ENCODE measurements at regions of chr18 and their contacts with region 1.

Region 1: DNA sequence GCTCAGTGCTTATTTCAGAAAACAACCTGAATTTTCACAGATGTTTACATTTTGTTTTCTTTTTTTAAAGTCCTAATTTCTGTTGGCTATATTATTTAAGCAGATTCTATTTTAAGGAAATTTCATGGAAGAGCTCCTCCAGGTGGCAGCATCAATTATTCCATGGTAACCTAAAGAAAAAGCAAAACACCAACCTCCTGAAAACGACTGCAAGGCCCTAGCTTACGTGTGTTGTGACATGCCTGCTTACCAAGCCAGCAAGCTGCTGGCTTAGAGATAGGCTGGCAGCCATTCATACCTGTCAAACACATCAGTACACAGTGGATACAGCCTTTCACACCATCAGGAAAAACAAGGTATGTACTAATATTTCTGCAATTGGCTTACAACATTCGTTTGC is 64.9 kb downstream of the LPIN2 start:
- DNase-seq: peak in 2 of 14 experiments; percentile 24 to 31
- ATAC-seq: peak; percentile 56
- H3K4me3 ChIP-seq: no peak overlapping the region
- H3K4me3 Mint-ChIP-seq: no peak overlapping the region
- H3K27ac ChIP-seq: no peak overlapping the region
- H3K27ac Mint-ChIP-seq: peak overlapping the region; percentile 51
- H3K4me1 ChIP-seq: peaks cover 13% of the 10 kb centered on the region
- H3K4me1 Mint-ChIP-seq: peaks cover 72% of the 10 kb centered on the region
- H3K27me3 ChIP-seq: no peaks in the 10 kb centered on the region
- H3K27me3 Mint-ChIP-seq: no peaks in the 10 kb centered on the region
- CTCF ChIP-seq: no peak

Region 2: GRCh38 chr18:2805970-2806943 is 141.8 kb before region 1 on chr18:
- CTCF ChIA-PET with region 1: no interaction called
- POLR2A ChIA-PET with region 1: no interaction called
- intact Hi-C with region 1: no loop called
- DNase-seq: no peak
- ATAC-seq: no peak
- H3K4me3 ChIP-seq: no peak overlapping the region
- H3K4me3 Mint-ChIP-seq: no peak overlapping the region
- H3K27ac ChIP-seq: no peak overlapping the region
- H3K27ac Mint-ChIP-seq: no peak overlapping the region
- H3K4me1 ChIP-seq: no peaks in the 10 kb centered on the region
- H3K4me1 Mint-ChIP-seq: no peaks in the 10 kb centered on the region
- H3K27me3 ChIP-seq: no peaks in the 10 kb centered on the region
- H3K27me3 Mint-ChIP-seq: no peaks in the 10 kb centered on the region
- CTCF ChIP-seq: no peak

Region 3: GRCh38 chr18:2971741-2972552 is 23.9 kb after region 1 on chr18:
- CTCF ChIA-PET with region 1: interaction called, 9 read pairs
- POLR2A ChIA-PET with region 1: interaction called, 10 read pairs
- intact Hi-C with region 1: no loop called
- DNase-seq: peak; percentile 42 to 91 (median 62)
- ATAC-seq: peak; percentile 73
- H3K4me3 ChIP-seq: peak overlapping the region; percentile 45
- H3K4me3 Mint-ChIP-seq: peak overlapping the region; percentile 92
- H3K27ac ChIP-seq: peak overlapping the region; percentile 81 to 89
- H3K27ac Mint-ChIP-seq: peak overlapping the region; percentile 96
- H3K4me1 ChIP-seq: peaks cover 79% of the 10 kb centered on the region
- H3K4me1 Mint-ChIP-seq: peaks cover 91% of the 10 kb centered on the region
- H3K27me3 ChIP-seq: no peaks in the 10 kb centered on the region
- H3K27me3 Mint-ChIP-seq: no peaks in the 10 kb centered on the region
- CTCF ChIP-seq: no peak